ENCODE measurements at regions of chr3 and their contacts with region 1.

Region 1: DNA sequence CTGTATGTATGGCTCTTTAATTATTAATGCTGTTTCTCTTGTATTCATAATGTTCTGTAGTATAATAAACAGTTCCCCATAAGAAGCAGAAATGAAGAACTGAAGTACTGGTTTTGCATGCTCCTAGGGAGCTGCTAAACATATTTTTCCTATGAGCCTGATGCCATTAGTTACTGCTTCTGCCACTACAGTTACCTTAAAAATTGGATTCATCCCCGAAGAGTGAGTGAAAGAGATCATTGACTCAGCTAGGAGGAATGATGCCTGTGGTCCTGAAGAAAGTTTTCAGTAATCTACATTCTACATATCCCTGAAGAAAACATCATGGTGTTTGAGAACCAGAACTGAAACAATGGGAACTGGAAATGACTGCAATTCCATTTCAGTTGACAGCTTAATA is 37.1 kb upstream of the ST3GAL6 start:
- DNase-seq: no peak
- ATAC-seq: no peak
- H3K4me3 ChIP-seq: no peak overlapping the region
- H3K27ac ChIP-seq: no peak overlapping the region
- H3K4me1 ChIP-seq: peaks cover 9% of the 10 kb centered on the region
- H3K27me3 ChIP-seq: no peaks in the 10 kb centered on the region
- CTCF ChIP-seq: no peak
- EP300 ChIP-seq: no peak
- POLR2A ChIP-seq: no peak
- RAD21 ChIP-seq: no peak

Region 2: GRCh38 chr3:98612587-98612986 is 113.5 kb before region 1 on chr3:
- CTCF ChIA-PET with region 1: no interaction called
- POLR2A ChIA-PET with region 1: no interaction called
- in situ Hi-C with region 1: no loop called
- intact Hi-C with region 1: loop called (anchors 5 kb)
- DNase-seq: peak; percentile 43
- ATAC-seq: peak; percentile 96
- H3K4me3 ChIP-seq: no peak overlapping the region
- H3K27ac ChIP-seq: no peak overlapping the region
- H3K4me1 ChIP-seq: 0 out of 2 replicates have a peak, but pooled peaks cover 14% of the 10 kb centered on the region
- H3K27me3 ChIP-seq: no peaks in the 10 kb centered on the region
- CTCF ChIP-seq: peak; percentile 67
- EP300 ChIP-seq: no peak
- POLR2A ChIP-seq: no peak
- RAD21 ChIP-seq: no peak

Measured in HepG2 (cell line).